Astrocyte of the cerebellum (primary cell): ENCODE measurements at regions of chr10 and their contacts with region 1.

Region 1: GRCh38 chr10:12129222-12130111 is at the start of gene SEC61A2:
- DNase-seq: peak; percentile 49
- H3K4me3 ChIP-seq: peak within 1 kb of the TSS; percentile 77
- CTCF ChIP-seq: no peak

Region 2: DNA sequence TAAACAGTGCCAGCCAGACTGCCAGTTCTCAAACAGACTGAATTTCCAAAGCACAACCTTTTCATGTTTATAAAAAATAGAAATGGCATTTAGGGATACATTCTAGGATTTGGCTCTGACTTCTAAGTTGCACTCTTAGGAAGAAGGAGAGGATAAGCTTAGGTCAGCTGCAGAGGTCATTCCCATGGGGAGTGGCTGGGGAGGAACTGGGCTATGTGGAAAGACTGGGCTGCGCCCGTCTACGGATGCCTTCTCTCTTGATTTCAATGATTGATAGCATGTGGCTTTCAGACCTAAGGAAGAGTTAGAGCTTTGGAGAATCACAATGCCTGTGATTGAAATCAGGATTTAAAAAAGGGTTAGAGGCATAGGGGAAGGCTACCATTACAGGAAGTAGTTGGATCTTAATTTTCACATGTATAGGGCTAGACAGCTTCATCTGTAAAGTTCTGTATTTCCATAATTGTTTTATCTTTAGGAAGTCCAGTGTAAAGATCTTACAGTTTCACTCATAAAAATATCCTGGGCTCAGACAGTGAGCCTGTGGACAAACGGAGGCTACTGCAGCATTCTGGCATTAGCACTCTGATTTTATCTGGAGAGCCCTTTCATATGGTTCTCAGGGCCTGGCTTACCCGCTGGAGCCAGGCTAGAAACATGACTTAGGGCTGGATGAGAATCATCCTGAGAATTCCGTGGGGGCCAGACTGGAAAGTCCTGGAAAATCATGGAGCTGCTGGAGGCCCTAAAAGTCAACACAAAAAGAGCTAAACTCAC is 36.7 kb after region 1 on chr10:
- in situ Hi-C with region 1: loop called (anchors 5 kb)
- DNase-seq: no peak
- H3K4me3 ChIP-seq: no peak overlapping the region
- CTCF ChIP-seq: no peak